ENCODE measurements at regions of chr14 and their contacts with region 1.

Region 1: GRCh38 chr14:64671591-64671990 is 32.6 kb upstream of the PLEKHG3 start:
- DNase-seq: no peak

Region 2: DNA sequence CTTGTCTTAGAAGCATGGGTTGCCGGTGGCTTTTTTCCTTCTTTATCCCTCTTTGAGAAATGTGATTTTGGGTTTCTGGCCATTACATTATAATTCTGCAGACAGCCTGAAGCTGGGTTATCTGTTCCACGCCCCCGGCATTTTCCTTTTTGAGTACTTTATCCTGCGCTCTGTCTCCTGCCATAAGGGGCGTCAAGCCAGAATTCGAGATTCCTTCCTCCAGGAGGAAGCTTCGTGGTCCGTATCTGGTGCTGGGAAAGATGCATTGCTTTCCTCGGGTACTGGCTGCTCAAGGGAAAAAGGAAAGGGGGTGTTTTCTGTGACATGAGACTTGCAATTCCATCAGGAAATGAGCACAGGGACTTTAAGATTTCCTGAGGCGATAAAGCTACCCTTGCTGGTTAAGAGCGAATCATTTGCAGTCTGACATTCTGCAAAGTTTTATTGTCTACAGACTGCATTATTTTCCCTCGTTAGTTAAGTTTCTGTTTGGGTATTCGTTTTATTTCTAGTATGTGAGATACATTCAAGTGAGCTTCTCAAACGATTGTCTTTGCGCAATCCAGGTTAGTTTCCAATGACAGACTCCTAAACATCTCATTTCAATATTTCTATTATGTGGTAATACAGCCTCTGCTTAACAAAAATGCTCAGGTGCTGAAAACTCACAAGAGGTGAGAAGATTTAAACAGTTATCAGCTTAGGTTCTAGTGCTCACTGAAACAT is 205.6 kb before region 1 on chr14:
- intact Hi-C with region 1: no loop called
- DNase-seq: peak in 6 of 10 donors; percentile 23 to 81 (median 30)

Region 3: GRCh38 chr14:64715628-64716412 is 44.2 kb after region 1 on chr14:
- intact Hi-C with region 1: loop called (anchors 5 kb)
- DNase-seq: peak in 8 of 10 donors; percentile 45 to 94 (median 66)

Region 4: GRCh38 chr14:64745511-64746091 is 74.0 kb after region 1 on chr14:
- intact Hi-C with region 1: loop called (anchors 5 kb)
- DNase-seq: peak in 2 of 10 donors; percentile 41 to 75

Region 5: GRCh38 chr14:64764641-64765520 is 93.3 kb after region 1 on chr14:
- intact Hi-C with region 1: loop called (anchors 1 kb)
- DNase-seq: peak in 9 of 10 donors; percentile 45 to 96 (median 74)

Region 6: DNA sequence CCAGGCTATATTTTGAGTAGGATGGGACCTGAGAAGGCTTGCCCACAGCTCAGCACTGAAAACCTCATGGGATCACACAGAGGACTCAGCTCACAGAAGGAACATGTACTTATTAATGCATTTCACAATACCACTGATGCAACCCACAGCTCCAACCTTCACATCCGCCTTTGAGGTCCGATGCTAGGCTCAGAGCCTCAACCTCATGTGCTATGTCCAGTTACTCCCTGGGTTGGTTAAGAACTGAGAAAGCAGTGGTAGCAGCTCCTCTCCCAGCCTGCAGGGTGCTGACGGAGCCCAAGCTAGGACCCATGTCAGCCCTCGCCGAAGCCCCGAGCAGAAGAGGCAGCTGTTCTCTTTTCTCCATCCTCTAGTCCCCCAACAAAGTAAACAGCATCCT is 155.3 kb after region 1 on chr14:
- intact Hi-C with region 1: no loop called
- DNase-seq: no peak

Region 7: DNA sequence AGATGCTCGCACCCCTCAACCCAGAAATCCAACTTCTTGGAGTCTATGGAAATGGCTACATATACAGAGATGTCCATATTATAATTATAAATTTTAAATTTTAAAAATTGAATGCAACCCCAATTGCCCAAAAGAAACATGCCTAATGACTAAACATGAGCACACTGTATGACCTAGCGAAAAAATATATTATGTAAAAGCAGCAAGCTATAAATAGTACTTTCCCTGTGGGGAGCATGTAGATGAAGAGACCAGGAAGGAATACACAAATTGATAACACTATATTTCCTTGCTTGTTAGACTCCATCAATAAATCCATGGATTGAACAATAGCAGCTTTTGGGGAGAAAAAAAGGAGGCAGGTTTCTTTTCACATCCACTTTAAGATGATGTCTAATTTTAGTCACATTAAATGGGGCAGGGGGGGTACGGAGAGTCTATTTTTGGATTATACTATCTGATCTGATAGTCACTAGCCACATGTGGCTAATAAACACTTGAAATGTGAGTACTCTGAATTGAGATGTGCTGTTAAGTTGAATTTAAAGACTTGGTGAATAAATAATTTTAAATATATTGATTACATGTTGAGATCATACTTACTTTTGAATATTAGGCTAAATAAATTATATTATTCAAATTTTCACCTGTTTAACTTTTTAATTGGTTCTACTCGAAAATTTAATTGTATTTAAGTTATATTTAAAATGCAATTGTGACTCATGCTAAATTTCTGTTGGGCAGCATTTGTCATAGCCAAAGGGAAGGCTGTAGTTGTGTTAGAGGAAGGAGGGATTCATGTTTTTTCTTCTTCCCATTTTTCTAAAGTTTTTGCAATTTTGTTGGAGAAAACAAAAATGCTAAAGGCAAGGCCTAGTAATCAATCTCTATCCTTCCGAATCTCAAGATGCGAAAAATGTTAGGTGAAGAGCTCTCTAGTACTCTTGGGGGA is 413.2 kb after region 1 on chr14:
- intact Hi-C with region 1: no loop called
- DNase-seq: no peak

Region 8: DNA sequence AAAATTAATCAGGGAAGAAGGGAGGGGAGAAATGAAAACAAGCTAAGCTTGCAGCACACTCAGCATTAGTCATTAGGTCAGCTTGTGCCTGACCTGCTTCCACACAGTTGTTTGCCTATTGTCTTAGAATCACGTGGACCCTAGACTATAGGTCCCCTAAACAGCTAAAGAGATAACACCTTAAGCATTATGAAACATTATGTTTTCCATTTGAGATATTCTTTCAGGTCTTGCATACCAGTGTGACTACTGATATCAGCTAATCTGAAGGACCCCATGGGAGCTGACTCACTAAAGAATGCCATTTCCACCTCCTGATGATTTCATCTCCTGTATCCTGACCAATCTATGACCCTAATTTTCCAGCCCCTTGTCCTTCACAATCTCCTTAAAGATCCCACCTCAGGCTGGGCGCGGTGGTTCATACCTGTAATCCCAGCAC is 586.8 kb after region 1 on chr14:
- intact Hi-C with region 1: no loop called
- DNase-seq: no peak